Prostate gland (tissue), 2 donors: ENCODE measurements at regions of chr16 and their contacts with region 1.

Region 1: DNA sequence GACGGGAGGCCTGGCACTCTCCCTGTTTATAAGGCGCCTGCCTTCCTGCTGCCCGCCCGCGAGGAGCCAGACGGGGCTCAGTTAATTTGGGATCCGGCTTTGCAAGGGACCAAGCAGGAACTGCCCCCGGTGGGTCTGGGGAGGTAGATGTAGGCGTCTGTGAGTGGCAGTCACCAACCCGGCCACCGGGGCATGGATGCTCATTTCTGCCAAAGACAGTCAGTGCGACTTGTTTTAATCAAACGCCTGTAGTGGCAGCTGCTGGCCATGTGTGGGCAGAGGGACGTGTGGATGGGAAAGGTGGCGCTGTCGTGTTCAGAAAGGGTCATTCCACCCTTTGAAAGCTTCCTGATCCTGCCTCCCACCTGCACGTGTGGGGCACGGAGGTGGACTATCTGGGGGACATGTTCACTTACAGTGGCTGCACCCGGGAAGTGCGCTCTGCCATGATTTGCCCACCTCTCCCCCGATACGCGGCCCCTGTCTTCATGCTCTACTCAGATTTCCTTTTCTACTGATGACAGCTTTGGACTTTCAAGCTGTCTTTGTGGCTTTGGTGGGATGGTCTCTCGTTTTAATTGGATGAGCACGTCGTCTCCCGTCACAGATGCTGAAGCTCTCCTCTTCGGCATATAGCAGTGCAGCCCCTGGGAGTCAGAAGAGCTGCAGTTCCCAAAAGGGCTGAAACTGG is 60.3 kb upstream of the CIBAR2 start:
- DNase-seq: no peak
- H3K4me3 ChIP-seq: no peak overlapping the region
- H3K27ac ChIP-seq: no peak overlapping the region
- H3K4me1 ChIP-seq: peaks cover 4% of the 10 kb centered on the region
- H3K27me3 ChIP-seq: no peaks in the 10 kb centered on the region
- CTCF ChIP-seq: peak in 2 of 4 experiments; percentile 17
- POLR2A ChIP-seq: no peak

Region 2: GRCh38 chr16:85123891-85124635 is 48.5 kb before region 1 on chr16:
- intact Hi-C with region 1: loop called (anchors 5 kb)
- DNase-seq: no peak
- H3K4me3 ChIP-seq: no peak overlapping the region
- H3K27ac ChIP-seq: peak overlapping the region; percentile 57 to 63
- H3K4me1 ChIP-seq: no peaks in the 10 kb centered on the region
- H3K27me3 ChIP-seq: no peaks in the 10 kb centered on the region
- CTCF ChIP-seq: no peak
- POLR2A ChIP-seq: no peak

Region 3: GRCh38 chr16:85213926-85214675 is 41.5 kb after region 1 on chr16:
- intact Hi-C with region 1: loop called (anchors 2 kb)
- DNase-seq: no peak
- H3K4me3 ChIP-seq: no peak overlapping the region
- H3K27ac ChIP-seq: no peak overlapping the region
- H3K4me1 ChIP-seq: no peaks in the 10 kb centered on the region
- H3K27me3 ChIP-seq: no peaks in the 10 kb centered on the region
- CTCF ChIP-seq: no peak
- POLR2A ChIP-seq: no peak